Activated CD4-positive, alpha-beta T cell treated with anti-CD3 and anti-CD28 coated beads for 36 hours (primary cell): ENCODE measurements at regions of chr15 and their contacts with region 1.

Region 1: GRCh38 chr15:40684381-40684780 is 10.6 kb upstream of the RAD51 start:
- DNase-seq: no peak
- ATAC-seq: no peak
- H3K4me3 Mint-ChIP-seq: no peak overlapping the region
- H3K27ac Mint-ChIP-seq: no peak overlapping the region
- H3K4me1 Mint-ChIP-seq: no peaks in the 10 kb centered on the region
- H3K27me3 Mint-ChIP-seq: no peaks in the 10 kb centered on the region

Region 2: GRCh38 chr15:40640789-40641188 is 43.6 kb before region 1 on chr15:
- CTCF ChIA-PET with region 1: no interaction called
- POLR2A ChIA-PET with region 1: no interaction called
- intact Hi-C with region 1: no loop called
- DNase-seq: no peak
- ATAC-seq: no peak
- H3K4me3 Mint-ChIP-seq: no peak overlapping the region
- H3K27ac Mint-ChIP-seq: no peak overlapping the region
- H3K4me1 Mint-ChIP-seq: no peaks in the 10 kb centered on the region
- H3K27me3 Mint-ChIP-seq: no peaks in the 10 kb centered on the region

Region 3: GRCh38 chr15:40722934-40723333 is 38.6 kb after region 1 on chr15:
- CTCF ChIA-PET with region 1: no interaction called
- POLR2A ChIA-PET with region 1: no interaction called
- intact Hi-C with region 1: loop called in 1 of 2 experiments (anchors 10 kb)
- DNase-seq: no peak
- ATAC-seq: peak; percentile 76
- H3K4me3 Mint-ChIP-seq: no peak overlapping the region
- H3K27ac Mint-ChIP-seq: no peak overlapping the region
- H3K4me1 Mint-ChIP-seq: peaks cover 14% of the 10 kb centered on the region
- H3K27me3 Mint-ChIP-seq: no peaks in the 10 kb centered on the region

Region 4: GRCh38 chr15:40743921-40744814 is 59.8 kb after region 1 on chr15:
- CTCF ChIA-PET with region 1: no interaction called
- POLR2A ChIA-PET with region 1: no interaction called
- intact Hi-C with region 1: loop called in 1 of 2 experiments (anchors 2 kb)
- DNase-seq: peak; percentile 82
- ATAC-seq: peak; percentile 93
- H3K4me3 Mint-ChIP-seq: peak overlapping the region; percentile 4
- H3K27ac Mint-ChIP-seq: peak overlapping the region; percentile 71
- H3K4me1 Mint-ChIP-seq: peaks cover 25% of the 10 kb centered on the region
- H3K27me3 Mint-ChIP-seq: no peaks in the 10 kb centered on the region

Region 5: DNA sequence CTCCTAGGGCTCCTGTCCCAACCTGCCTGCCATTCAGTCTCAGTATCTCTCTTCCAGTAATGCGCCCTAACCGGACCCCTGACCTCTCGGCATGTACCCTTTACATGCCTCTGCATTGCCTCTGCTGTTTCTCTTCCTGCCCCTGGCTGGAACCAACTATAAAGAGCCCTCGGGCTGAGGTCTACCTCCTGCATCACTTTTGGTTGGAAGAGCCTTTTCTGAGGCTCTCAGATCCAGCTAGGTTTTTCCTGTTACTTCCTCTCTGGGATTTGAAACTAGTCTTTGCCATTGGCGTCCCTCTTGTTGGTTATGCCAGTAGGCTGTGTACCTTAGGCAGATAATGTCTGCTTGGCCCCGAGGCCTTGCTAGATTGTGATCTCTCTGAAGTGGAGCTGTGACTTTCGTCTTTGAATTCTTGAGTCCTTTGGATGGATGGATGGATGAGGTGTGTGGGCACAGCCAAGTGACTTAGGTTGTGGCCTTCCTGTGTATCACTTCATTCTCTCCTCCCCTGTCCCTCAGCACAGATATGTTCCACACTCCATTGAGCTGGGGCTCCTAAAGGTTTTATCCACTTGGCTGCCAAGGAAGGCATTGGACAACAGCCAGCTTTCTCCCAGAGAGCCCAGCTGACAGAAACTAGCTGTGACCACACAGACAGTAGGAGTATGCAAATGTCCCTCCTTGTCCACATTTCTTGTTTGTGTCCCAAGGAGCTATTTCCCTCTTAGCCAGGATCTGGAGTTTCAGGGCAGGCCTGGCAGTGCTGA is 130.7 kb after region 1 on chr15:
- CTCF ChIA-PET with region 1: no interaction called
- POLR2A ChIA-PET with region 1: no interaction called
- intact Hi-C with region 1: no loop called
- DNase-seq: no peak
- ATAC-seq: no peak
- H3K4me3 Mint-ChIP-seq: no peak overlapping the region
- H3K27ac Mint-ChIP-seq: no peak overlapping the region
- H3K4me1 Mint-ChIP-seq: no peaks in the 10 kb centered on the region
- H3K27me3 Mint-ChIP-seq: no peaks in the 10 kb centered on the region

Region 6: DNA sequence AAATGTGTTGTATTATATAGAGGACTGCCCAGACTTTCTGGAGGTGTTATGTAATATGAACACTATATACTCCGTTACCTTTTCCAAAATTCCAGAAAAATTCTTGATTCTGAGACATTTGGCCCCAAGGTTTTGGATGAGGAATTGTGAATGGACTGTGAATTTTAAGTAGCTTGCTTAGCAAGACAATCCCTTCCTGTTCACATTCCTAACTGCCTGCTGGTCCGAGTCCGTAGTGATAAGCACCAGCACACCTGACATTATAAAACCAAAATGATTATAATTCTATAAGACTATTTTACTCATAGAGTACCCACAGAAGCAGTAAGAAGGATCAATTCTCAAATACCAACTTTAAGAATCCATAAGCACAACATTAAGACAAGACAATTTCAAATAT is 535.0 kb after region 1 on chr15:
- CTCF ChIA-PET with region 1: no interaction called
- POLR2A ChIA-PET with region 1: no interaction called
- intact Hi-C with region 1: no loop called
- DNase-seq: no peak
- ATAC-seq: no peak
- H3K4me3 Mint-ChIP-seq: no peak overlapping the region
- H3K27ac Mint-ChIP-seq: no peak overlapping the region
- H3K4me1 Mint-ChIP-seq: no peaks in the 10 kb centered on the region
- H3K27me3 Mint-ChIP-seq: peaks cover 9% of the 10 kb centered on the region